Heart left ventricle (tissue), 16 donors: ENCODE measurements at regions of chr1 and their contacts with region 1.

Region 1: GRCh38 chr1:40416709-40417108 is 33.6 kb upstream of the ZFP69B start:
- DNase-seq: no peak
- ATAC-seq: no peak
- H3K4me3 ChIP-seq: no peak overlapping the region
- H3K27ac ChIP-seq: no peak overlapping the region
- H3K4me1 ChIP-seq: peaks cover 0 to 10% (median 0%) of the 10 kb centered on the region in 12 donors
- H3K27me3 ChIP-seq: no peaks in the 10 kb centered on the region
- CTCF ChIP-seq: no peak
- POLR2A ChIP-seq: no peak

Region 2: DNA sequence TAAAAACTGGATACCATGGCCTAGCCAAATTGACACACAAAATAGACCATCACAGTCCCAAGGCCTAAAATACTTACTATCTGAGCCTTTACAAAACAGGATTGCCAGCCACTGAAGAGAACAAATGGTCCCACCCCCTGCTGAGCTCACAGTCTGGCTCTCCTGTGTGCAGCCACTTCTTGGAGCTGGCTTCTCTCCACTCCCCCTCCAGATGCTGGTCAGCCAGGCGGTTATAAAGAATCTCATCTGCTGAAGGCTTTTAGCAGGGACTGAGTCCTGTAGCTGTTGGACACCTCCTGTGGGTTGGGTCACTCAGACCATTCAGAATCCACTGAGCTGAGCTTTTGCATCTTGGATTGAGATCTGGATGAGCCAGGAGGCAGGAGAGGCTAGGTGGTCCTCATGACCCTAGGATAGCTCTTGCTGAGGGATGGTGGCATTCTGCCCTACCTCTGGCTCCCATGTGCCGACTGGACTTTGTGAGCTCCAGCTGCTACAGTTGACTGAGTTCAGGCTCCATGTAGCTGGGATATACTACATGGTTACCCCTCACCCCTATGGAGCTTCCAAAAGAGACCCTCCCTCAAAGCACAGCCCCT is 661.7 kb before region 1 on chr1:
- intact Hi-C with region 1: loop called in 1 of 10 experiments (anchors 5 kb)
- DNase-seq: no peak
- ATAC-seq: peak; percentile 67 to 81 (median 79)
- H3K4me3 ChIP-seq: no peak overlapping the region
- H3K27ac ChIP-seq: peak overlapping the region in 2 of 12 donors; percentile 32 to 39
- H3K4me1 ChIP-seq: peaks cover 0 to 8% (median 0%) of the 10 kb centered on the region in 12 donors
- H3K27me3 ChIP-seq: no peaks in the 10 kb centered on the region
- CTCF ChIP-seq: no peak
- POLR2A ChIP-seq: no peak

Region 3: GRCh38 chr1:40079774-40080400 is 336.8 kb before region 1 on chr1:
- intact Hi-C with region 1: no loop called
- DNase-seq: no peak
- ATAC-seq: peak in 1 of 4 donors; percentile 27
- H3K4me3 ChIP-seq: no peak overlapping the region
- H3K27ac ChIP-seq: peak overlapping the region in 1 of 12 donors; percentile 81
- H3K4me1 ChIP-seq: peaks cover 0 to 78% (median 0%) of the 10 kb centered on the region in 12 donors
- H3K27me3 ChIP-seq: no peaks in the 10 kb centered on the region
- CTCF ChIP-seq: no peak
- POLR2A ChIP-seq: no peak

Region 4: GRCh38 chr1:40476924-40477677 is 60.4 kb after region 1 on chr1 and contains the start of gene ZFP69:
- intact Hi-C with region 1: no loop called
- DNase-seq: peak; percentile 75 to 89 (median 80)
- ATAC-seq: peak; percentile 54 to 98 (median 94)
- H3K4me3 ChIP-seq: peak within 1 kb of the TSS; percentile 64 to 99 (median 89)
- H3K27ac ChIP-seq: peak within 1 kb of the TSS in 11 of 12 donors; percentile 17 to 80 (median 68)
- H3K4me1 ChIP-seq: peaks cover 0 to 17% (median 7%) of the 10 kb centered on the region in 12 donors
- H3K27me3 ChIP-seq: no peaks in the 10 kb centered on the region
- CTCF ChIP-seq: peak in 1 of 12 donors; percentile 15
- POLR2A ChIP-seq: peak in 1 of 2 donors; percentile 68
- total RNA-seq, gene ZFP69: 0.75 to 3.1 (median 2.0) TPM